ENCODE measurements at regions of chr1 and their contacts with region 1.

Region 1: DNA sequence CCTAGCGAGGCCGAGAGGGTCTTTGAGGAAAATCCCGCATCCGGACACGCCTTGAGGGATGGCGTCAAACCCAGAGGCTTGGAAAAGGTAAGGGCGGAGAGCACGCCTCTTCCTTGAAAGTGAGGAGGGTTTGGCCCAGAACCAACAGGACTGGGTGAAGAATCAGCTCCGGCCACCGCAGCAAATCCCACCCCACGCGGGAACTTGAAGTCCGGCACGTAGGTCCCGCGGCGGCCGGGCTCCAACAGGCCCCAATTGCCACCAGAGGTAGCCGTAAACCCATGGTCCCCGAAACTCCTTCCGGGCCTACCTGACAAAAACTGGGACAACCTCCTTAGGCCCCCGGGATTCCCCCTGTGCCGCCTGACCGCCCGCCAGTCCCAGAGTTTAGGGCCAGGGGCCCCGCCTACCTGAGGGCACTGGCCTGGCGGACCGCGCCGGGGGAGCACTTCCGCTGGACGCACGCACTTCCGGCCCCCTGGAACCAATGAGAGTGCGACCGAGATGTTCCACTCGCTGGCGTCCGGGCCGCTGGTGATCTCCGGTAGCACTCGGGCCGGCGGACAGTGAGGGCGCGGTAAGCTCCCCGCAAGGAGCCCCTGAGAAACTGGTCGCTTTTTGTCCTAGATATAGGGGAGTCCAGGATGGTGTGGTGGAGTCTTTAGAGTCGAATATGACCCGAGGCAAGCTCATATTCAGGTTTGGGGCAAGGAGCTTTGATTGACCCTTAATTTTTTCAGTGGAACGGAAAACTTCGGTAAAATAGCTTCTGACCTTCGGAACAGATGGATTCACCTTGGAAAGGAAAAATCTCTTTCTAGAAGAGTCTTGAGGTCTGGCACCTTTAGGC is at the starts of genes LZIC and NMNAT1:
- DNase-seq: peak; percentile 95
- ATAC-seq: peak; percentile 97
- H3K4me3 Mint-ChIP-seq: peak within 1 kb of the TSS; percentile 96
- H3K27ac Mint-ChIP-seq: peak within 1 kb of the TSS; percentile 98
- H3K4me1 Mint-ChIP-seq: peaks cover 18% of the 10 kb centered on the region
- H3K27me3 Mint-ChIP-seq: no peaks in the 10 kb centered on the region
- total RNA-seq, gene LZIC: 23.4 to 32.0 TPM
- total RNA-seq, gene NMNAT1: 7.3 to 8.5 TPM

Region 2: GRCh38 chr1:9350013-9350908 is 592.9 kb before region 1 on chr1:
- CTCF ChIA-PET with region 1: no interaction called
- POLR2A ChIA-PET with region 1: no interaction called
- intact Hi-C with region 1: no loop called
- DNase-seq: no peak
- ATAC-seq: no peak
- H3K4me3 Mint-ChIP-seq: no peak overlapping the region
- H3K27ac Mint-ChIP-seq: no peak overlapping the region
- H3K4me1 Mint-ChIP-seq: peaks cover 2% of the 10 kb centered on the region
- H3K27me3 Mint-ChIP-seq: no peaks in the 10 kb centered on the region

Region 3: GRCh38 chr1:9428601-9429341 is 514.4 kb before region 1 on chr1:
- CTCF ChIA-PET with region 1: no interaction called
- POLR2A ChIA-PET with region 1: no interaction called
- intact Hi-C with region 1: loop called in 1 of 2 experiments (anchors 2 kb)
- DNase-seq: peak; percentile 100
- ATAC-seq: peak; percentile 91
- H3K4me3 Mint-ChIP-seq: peak overlapping the region; percentile 86
- H3K27ac Mint-ChIP-seq: peak overlapping the region; percentile 98
- H3K4me1 Mint-ChIP-seq: peaks cover 47% of the 10 kb centered on the region
- H3K27me3 Mint-ChIP-seq: no peaks in the 10 kb centered on the region

Region 4: GRCh38 chr1:9784508-9785133 is 158.5 kb before region 1 on chr1:
- CTCF ChIA-PET with region 1: interaction called, 16 read pairs
- POLR2A ChIA-PET with region 1: no interaction called
- intact Hi-C with region 1: loop called (anchors 1 to 5 kb)
- DNase-seq: peak; percentile 83
- ATAC-seq: peak; percentile 45
- H3K4me3 Mint-ChIP-seq: no peak overlapping the region
- H3K27ac Mint-ChIP-seq: no peak overlapping the region
- H3K4me1 Mint-ChIP-seq: peaks cover 39% of the 10 kb centered on the region
- H3K27me3 Mint-ChIP-seq: no peaks in the 10 kb centered on the region

Region 5: DNA sequence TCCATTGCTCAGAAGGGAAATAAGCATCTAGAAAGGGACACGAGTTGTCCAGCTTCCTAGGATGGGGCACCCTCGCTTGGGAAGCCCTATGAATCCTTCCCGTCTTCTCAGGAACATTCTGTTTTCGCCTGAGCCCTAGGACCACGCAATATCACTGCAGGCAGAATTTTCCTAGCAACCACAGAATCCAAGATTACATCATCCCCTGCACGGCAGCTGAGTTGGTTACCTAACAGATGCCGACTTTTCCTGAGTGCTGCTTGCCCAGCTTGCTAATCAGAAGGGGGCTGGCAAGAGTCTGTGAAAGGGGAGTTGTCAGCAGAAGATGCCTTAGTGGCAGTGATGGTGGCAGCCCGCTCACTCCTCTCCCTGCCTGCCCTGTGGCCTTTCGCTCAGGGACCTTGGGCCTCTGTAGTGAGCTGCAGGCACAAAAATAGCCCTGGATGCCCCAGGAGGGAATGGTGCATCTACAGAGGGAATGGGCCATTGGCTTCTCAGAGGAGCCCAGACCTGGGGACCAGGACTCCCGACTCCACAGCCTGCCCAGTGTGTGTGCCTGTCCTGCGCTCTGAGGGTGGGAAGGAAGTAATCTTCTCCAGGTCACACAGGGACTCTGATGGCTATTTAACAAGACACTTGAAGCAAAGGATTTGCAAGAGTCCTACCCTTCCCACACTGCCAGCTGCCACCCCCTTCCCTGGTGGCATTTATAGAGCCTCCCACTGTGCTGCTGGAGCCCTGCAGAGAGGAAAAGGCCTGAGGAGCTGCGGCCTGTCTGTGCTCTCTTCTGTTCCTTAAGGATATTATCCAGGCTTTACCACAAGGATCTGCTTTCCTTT is 90.5 kb before region 1 on chr1:
- CTCF ChIA-PET with region 1: no interaction called
- POLR2A ChIA-PET with region 1: no interaction called
- intact Hi-C with region 1: no loop called
- DNase-seq: no peak
- ATAC-seq: no peak
- H3K4me3 Mint-ChIP-seq: no peak overlapping the region
- H3K27ac Mint-ChIP-seq: no peak overlapping the region
- H3K4me1 Mint-ChIP-seq: peaks cover 5% of the 10 kb centered on the region
- H3K27me3 Mint-ChIP-seq: no peaks in the 10 kb centered on the region

Region 6: GRCh38 chr1:9900142-9901043 is 42.8 kb before region 1 on chr1:
- CTCF ChIA-PET with region 1: no interaction called
- POLR2A ChIA-PET with region 1: interaction called, 5 read pairs
- intact Hi-C with region 1: loop called in 1 of 2 experiments (anchors 5 kb)
- DNase-seq: no peak
- ATAC-seq: no peak
- H3K4me3 Mint-ChIP-seq: no peak overlapping the region
- H3K27ac Mint-ChIP-seq: no peak overlapping the region
- H3K4me1 Mint-ChIP-seq: peaks cover 27% of the 10 kb centered on the region
- H3K27me3 Mint-ChIP-seq: no peaks in the 10 kb centered on the region

Region 7: GRCh38 chr1:10170239-10170574 is 227.0 kb after region 1 on chr1:
- CTCF ChIA-PET with region 1: no interaction called
- POLR2A ChIA-PET with region 1: no interaction called
- intact Hi-C with region 1: loop called in 1 of 2 experiments (anchors 1 kb)
- DNase-seq: peak; percentile 48
- ATAC-seq: peak; percentile 89
- H3K4me3 Mint-ChIP-seq: peak overlapping the region; percentile 31
- H3K27ac Mint-ChIP-seq: peak overlapping the region; percentile 93
- H3K4me1 Mint-ChIP-seq: peaks cover 46% of the 10 kb centered on the region
- H3K27me3 Mint-ChIP-seq: no peaks in the 10 kb centered on the region

Region 8: GRCh38 chr1:10472220-10473144 is 529.3 kb after region 1 on chr1 and contains the start of gene DFFA:
- CTCF ChIA-PET with region 1: no interaction called
- POLR2A ChIA-PET with region 1: no interaction called
- intact Hi-C with region 1: loop called in 1 of 2 experiments (anchors 1 kb)
- DNase-seq: peak; percentile 96
- ATAC-seq: peak; percentile 83
- H3K4me3 Mint-ChIP-seq: peak within 1 kb of the TSS; percentile 97
- H3K27ac Mint-ChIP-seq: peak within 1 kb of the TSS; percentile 92
- H3K4me1 Mint-ChIP-seq: peaks cover 38% of the 10 kb centered on the region
- H3K27me3 Mint-ChIP-seq: no peaks in the 10 kb centered on the region
- total RNA-seq, gene DFFA: 45.7 to 46.4 TPM